Posterior vena cava (tissue), 2 donors: ENCODE measurements at regions of chr6 and their contacts with region 1.

Region 1: GRCh38 chr6:7243179-7243981 is 69.6 kb downstream of the SSR1 start:
- DNase-seq: no peak

Region 2: DNA sequence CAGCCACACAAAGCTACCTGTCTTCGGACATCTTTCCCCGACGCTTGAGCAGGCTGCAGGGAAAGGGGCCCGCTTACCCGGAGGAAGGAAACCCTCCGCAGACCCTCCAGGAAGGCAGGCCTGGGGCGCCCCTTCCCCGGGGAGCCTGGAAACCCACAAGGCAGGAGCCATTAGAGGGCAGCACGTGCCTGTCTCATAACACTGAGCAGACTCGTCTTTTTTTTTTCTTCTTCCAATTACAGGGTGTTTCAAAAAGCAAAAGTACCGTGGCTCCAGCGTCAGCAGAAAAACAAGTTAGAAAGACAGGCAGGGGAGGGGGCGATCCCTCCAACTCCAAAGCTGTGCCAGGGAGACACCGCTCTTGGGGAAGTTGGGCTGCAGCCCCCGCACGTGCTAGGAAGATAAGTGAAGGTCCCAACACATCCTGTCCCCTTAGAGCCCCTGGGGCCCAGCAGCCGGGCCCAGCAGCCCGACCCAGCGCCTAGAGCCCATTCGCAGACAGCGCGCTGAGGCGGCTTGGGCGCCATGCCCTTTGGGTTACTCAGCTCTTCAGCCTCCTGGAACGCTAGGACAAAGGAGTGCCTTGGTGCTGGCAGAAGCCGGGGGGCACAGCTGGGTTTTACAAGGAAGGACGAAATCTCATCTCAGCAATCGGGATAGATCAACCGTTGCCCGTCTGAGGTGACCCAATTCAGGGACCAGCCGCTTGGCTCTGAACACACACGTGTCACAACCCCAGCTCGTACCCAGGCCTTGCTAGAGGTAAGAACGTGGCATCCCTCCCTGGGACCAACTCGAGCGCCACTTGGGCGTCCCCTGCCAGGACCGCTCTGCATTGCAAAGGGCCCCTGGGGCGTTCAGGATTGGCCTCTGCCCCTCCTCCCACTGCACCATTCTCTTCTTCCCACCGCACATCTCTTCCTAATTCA is 518.6 kb before region 1 on chr6:
- intact Hi-C with region 1: loop called (anchors 10 kb)
- DNase-seq: peak; percentile 88

Region 3: DNA sequence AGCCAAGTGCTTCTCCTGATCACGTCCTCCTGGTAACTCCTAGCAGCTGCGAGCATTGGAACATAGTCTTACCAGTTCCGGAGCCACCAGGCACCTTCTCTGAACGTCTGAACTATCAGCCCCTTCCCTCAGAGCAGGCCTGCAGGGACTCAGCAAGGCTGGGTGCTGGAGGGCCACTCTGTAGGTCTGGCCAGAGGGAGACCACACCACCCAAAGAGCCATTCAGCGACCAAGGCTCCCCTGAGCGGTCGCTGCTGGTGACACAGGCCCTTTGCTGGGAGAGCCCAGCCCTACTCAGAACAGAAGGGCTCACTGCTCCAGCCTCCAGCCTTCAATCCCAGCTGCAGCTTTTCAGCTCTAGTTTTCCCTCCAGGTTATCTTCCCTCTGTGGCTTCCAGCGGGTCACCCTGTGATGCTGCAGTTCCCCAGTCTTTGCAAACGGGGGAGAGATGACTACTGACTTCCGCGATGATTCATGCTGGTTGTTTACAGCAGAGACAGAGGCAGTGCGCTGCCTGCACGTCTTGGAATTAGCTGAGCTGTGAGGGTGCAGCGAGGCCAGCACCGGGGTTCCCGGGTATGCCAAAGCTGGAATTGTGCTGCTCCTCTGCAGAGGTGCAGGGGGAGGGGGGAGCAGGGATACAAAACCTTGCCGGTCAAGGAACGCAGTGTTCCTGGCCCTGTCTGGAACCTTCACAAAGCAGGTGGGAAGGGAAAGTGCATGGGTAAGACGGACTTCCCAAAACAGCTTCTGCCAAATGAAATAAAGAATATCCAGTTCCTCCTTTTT is 493.5 kb before region 1 on chr6:
- intact Hi-C with region 1: no loop called
- DNase-seq: peak; percentile 83

Region 4: GRCh38 chr6:7107578-7108195 is 135.7 kb before region 1 on chr6 and contains the start of gene RREB1:
- intact Hi-C with region 1: loop called in 1 of 2 experiments (anchors 10 kb)
- DNase-seq: peak; percentile 86
- total RNA-seq, gene RREB1: 28.8 to 31.8 TPM

Region 5: GRCh38 chr6:7312616-7313504 is 69.5 kb after region 1 on chr6 and contains the start of gene SSR1:
- intact Hi-C with region 1: no loop called
- DNase-seq: peak; percentile 99
- total RNA-seq, gene SSR1: 124 to 133 TPM